ENCODE measurements at regions of chr4 and their contacts with region 1.

Region 1: DNA sequence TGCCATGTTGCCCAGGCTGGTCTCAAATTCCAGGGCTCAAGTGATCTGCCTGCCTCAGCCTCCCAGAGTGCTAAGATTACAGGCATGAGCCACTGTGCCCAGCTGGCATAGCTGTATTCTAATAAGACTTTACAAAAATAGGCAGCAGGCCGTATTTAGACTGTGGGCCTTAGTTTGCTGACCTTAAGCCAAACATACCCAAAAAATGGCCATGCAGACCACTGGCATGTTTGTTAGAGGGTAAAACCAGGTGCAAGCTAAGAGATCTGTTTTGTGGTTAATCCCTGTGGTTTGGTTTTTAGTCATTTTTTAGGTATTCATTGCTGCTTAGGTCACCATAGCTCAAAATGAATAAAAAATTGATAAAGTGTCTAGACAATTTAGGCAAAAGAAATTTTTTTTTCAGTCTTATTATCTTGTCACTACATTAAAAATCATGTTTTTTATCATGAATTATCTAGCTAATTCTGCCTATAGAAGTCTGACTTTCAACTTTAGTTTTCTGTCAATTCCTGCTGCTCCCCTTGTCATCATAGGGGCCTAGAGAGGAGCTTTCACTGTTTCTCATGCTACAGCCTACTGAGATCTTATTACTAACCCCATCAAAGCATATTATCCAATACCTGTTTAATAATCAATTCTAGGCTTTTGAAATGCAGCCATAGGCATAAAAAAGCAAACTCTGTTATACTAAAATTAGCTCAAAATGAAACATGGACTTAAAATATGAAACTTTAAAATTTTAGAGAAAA is 7.5 kb upstream of the SPINK2 start:
- DNase-seq: peak in 2 of 3 donors; percentile 43 to 62
- H3K4me3 ChIP-seq: no peak overlapping the region
- H3K27ac ChIP-seq: no peak overlapping the region
- H3K4me1 ChIP-seq: peaks cover 0 to 20% (median 8%) of the 10 kb centered on the region in 4 experiments
- H3K27me3 ChIP-seq: no peaks in the 10 kb centered on the region

Region 2: DNA sequence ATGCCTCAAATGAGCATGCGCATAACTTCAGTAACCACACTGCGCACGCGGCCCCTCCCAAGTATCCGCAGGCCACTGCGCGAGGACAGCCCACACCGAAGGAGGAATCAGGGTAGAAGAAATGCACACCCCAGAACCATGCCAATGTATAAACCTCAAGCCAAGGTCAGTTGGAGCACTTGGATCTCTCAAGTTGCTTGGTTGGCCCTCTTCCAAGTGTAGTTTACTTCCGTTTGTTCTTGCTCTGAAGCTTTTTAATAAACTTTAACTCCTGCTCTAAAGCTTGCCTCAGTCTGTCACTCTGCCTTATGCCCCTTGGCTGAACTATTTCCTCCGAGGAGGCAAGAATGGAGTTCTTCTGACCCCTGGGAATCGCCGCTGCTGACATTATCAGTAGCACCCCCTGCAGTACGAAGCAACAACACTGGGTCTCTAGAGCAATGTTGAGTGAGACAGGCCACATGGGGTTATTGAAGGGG is 14.5 kb after region 1 on chr4:
- CTCF ChIA-PET with region 1: interaction called, 38 read pairs
- POLR2A ChIA-PET with region 1: no interaction called
- DNase-seq: no peak
- H3K4me3 ChIP-seq: no peak overlapping the region
- H3K27ac ChIP-seq: no peak overlapping the region
- H3K4me1 ChIP-seq: peaks cover 0 to 7% (median 2%) of the 10 kb centered on the region in 4 experiments
- H3K27me3 ChIP-seq: no peaks in the 10 kb centered on the region

Region 3: GRCh38 chr4:56972809-56973208 is 143.8 kb after region 1 on chr4:
- CTCF ChIA-PET with region 1: no interaction called
- POLR2A ChIA-PET with region 1: no interaction called
- DNase-seq: peak in 2 of 3 donors; percentile 28 to 37
- H3K4me3 ChIP-seq: peak overlapping the region in 1 of 7 experiments; percentile 10
- H3K27ac ChIP-seq: no peak overlapping the region
- H3K4me1 ChIP-seq: peaks cover 0 to 19% (median 18%) of the 10 kb centered on the region in 4 experiments
- H3K27me3 ChIP-seq: no peaks in the 10 kb centered on the region

Measured in common myeloid progenitor, CD34-positive (primary cell).